A549 (cell line): ENCODE measurements at regions of chr19 and their contacts with region 1.

Region 1: DNA sequence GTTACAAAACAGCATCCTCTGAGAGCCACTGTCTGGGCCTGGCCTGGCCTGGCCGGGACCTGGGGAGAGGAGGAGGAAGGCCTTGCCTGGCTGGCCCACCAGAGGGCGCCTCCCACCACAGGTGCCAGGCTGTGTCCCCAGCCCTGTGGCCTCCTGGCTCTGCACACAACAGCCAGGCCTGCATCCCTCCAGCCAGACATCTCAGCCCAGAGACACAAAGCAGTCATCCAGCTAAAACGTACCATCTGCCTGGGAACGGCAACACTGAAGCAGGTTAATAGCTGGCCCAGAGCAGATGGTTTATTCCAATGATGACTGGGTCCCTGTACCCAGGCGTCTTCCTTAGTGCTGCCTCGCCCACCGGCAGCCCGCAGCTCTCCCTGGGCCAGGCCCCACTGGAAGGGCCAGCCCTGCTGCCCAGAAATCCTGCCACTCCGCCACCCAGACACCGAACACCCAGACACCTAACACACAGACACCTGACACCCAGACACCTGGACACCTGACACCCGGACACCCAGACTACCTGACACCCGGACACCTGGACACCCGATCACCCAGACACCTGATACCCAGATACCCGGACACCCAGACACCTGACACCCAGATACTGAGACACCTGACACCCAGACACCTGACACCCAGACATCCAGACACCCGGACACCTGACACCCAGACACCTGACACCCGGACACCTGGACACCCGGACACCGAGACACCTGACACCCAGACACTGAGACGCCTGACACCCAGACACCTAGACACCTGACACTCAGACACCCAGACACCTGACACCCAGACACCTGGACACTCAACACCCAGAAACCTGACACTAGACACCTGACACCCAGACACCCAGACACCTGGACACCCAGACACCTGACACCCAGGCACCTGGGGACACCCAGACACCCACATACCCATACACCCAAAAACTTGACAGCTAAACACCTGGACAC is 20.1 kb downstream of the C19orf12 start:
- DNase-seq: peak; percentile 84 to 85
- ATAC-seq: peak; percentile 96 to 99
- H3K4me3 ChIP-seq: no peak overlapping the region
- H3K27ac ChIP-seq: no peak overlapping the region
- H3K4me1 ChIP-seq: no peaks in the 10 kb centered on the region
- CTCF ChIP-seq: peak; percentile 81
- EP300 ChIP-seq: no peak
- POLR2A ChIP-seq: no peak
- RAD21 ChIP-seq: peak; percentile 58 to 68

Region 2: GRCh38 chr19:29366757-29367156 is 328.2 kb before region 1 on chr19:
- CTCF ChIA-PET with region 1: no interaction called
- POLR2A ChIA-PET with region 1: no interaction called
- DNase-seq: no peak
- ATAC-seq: no peak
- H3K4me3 ChIP-seq: no peak overlapping the region
- H3K27ac ChIP-seq: no peak overlapping the region
- H3K4me1 ChIP-seq: no peaks in the 10 kb centered on the region
- CTCF ChIP-seq: no peak
- EP300 ChIP-seq: no peak
- POLR2A ChIP-seq: no peak
- RAD21 ChIP-seq: no peak

Region 3: GRCh38 chr19:29651622-29652394 is 43.1 kb before region 1 on chr19:
- CTCF ChIA-PET with region 1: no interaction called
- POLR2A ChIA-PET with region 1: no interaction called
- DNase-seq: no peak
- ATAC-seq: no peak
- H3K4me3 ChIP-seq: no peak overlapping the region
- H3K27ac ChIP-seq: no peak overlapping the region
- H3K4me1 ChIP-seq: no peaks in the 10 kb centered on the region
- CTCF ChIP-seq: no peak
- EP300 ChIP-seq: no peak
- POLR2A ChIP-seq: no peak
- RAD21 ChIP-seq: no peak

Region 4: DNA sequence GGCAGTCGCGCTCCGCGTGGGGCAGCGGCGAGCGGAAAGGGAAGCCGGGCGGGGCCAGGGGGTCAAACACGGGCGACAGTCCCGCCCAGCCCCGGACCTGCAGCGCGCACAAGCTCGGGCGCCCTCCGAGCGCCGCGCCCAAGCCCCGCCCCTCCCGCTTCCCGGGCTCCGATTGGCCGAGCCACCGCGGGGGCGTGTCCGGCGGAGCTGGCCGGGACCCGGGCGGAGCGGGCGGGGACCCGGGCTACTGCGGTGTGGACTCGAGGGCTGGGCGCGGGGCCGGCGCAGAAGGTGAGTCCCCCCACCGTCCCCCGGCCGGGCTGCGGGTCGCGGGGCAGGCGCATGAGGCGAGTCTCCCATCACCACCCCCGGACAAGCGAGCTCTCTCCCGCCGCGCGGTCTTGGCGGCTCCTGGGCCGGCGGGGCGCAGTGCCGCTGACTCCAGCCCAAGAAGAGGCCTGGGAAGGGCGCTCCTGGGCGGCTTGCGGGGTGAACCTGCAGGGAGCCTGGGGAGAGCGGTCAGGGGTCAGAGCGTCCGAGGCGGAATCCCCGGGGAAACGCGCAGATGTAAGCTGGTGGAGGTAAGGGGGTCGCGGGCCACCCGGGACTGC is 29.6 kb before region 1 on chr19 and contains the start of gene PLEKHF1:
- CTCF ChIA-PET with region 1: interaction called, 13 read pairs
- POLR2A ChIA-PET with region 1: no interaction called
- DNase-seq: peak; percentile 85 to 98
- ATAC-seq: peak; percentile 87 to 97
- H3K4me3 ChIP-seq: peak within 1 kb of the TSS; percentile 82
- H3K27ac ChIP-seq: peak within 1 kb of the TSS; percentile 74 to 86
- H3K4me1 ChIP-seq: peaks cover 19% of the 10 kb centered on the region
- CTCF ChIP-seq: no peak
- EP300 ChIP-seq: no peak
- POLR2A ChIP-seq: peak; percentile 35; the same call in 1 of the 2 replicates
- RAD21 ChIP-seq: no peak
- polyA plus RNA-seq, gene PLEKHF1: 2.1 and 2.3 TPM in 2 replicates

Region 5: GRCh38 chr19:29671393-29672160 is 23.4 kb before region 1 on chr19:
- CTCF ChIA-PET with region 1: interaction called, 33 read pairs
- POLR2A ChIA-PET with region 1: no interaction called
- DNase-seq: peak in 1 of 2 experiments; percentile 56
- ATAC-seq: peak in 1 of 2 experiments; percentile 49; a peak in 3 of 6 replicates
- H3K4me3 ChIP-seq: no peak overlapping the region
- H3K27ac ChIP-seq: no peak overlapping the region
- H3K4me1 ChIP-seq: peaks cover 6% of the 10 kb centered on the region; the same call in 1 of the 3 replicates
- CTCF ChIP-seq: no peak
- EP300 ChIP-seq: no peak
- POLR2A ChIP-seq: no peak
- RAD21 ChIP-seq: no peak

Region 6: GRCh38 chr19:29680447-29680846 is 14.5 kb before region 1 on chr19:
- CTCF ChIA-PET with region 1: interaction called, 33 read pairs
- POLR2A ChIA-PET with region 1: no interaction called
- DNase-seq: no peak
- ATAC-seq: peak in 1 of 2 experiments; percentile 3; a peak in 3 of 6 replicates
- H3K4me3 ChIP-seq: no peak overlapping the region
- H3K27ac ChIP-seq: no peak overlapping the region
- H3K4me1 ChIP-seq: no peaks in the 10 kb centered on the region
- CTCF ChIP-seq: no peak
- EP300 ChIP-seq: no peak
- POLR2A ChIP-seq: no peak
- RAD21 ChIP-seq: no peak

Region 7: DNA sequence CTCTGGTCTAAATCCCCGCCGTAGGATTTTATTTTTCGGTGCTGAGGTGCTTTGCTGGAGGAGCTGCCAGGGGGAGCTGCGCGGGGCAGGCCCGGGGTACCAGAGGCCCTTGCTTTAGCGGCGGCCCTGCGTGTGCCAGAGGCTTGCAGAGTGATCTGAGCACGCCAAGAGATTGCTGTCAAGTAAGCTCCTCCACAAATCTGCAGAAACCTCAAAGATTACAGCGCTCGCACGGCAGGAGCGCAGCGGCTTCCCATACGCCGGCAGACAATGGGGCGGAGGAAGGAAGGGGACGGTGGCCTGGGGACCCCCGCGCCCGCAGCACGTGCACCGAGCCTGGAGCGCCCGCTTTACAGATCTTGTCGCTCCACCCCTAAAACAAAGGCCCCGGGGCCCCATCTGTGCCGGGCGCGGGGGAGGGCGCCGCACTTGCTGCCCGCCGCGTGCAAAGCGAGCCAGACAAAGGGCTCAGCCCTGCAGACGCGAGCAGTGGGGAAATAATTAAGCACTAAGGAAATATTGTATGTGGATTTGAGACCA is 29.2 kb after region 1 on chr19:
- CTCF ChIA-PET with region 1: interaction called, 17 read pairs
- POLR2A ChIA-PET with region 1: no interaction called
- DNase-seq: no peak
- ATAC-seq: no peak
- H3K4me3 ChIP-seq: no peak overlapping the region
- H3K27ac ChIP-seq: no peak overlapping the region
- H3K4me1 ChIP-seq: no peaks in the 10 kb centered on the region
- CTCF ChIP-seq: no peak
- EP300 ChIP-seq: no peak
- POLR2A ChIP-seq: no peak
- RAD21 ChIP-seq: no peak

Region 8: GRCh38 chr19:29806098-29806866 is 111.3 kb after region 1 on chr19:
- CTCF ChIA-PET with region 1: no interaction called
- POLR2A ChIA-PET with region 1: no interaction called
- DNase-seq: peak; percentile 53 to 89
- ATAC-seq: peak in 1 of 2 experiments; percentile 78; a peak in 3 of 6 replicates
- H3K4me3 ChIP-seq: no peak overlapping the region
- H3K27ac ChIP-seq: peak overlapping the region in 1 of 2 experiments; percentile 6; a peak in 1 of 6 replicates
- H3K4me1 ChIP-seq: peaks cover 14% of the 10 kb centered on the region
- CTCF ChIP-seq: no peak
- EP300 ChIP-seq: no peak
- POLR2A ChIP-seq: no peak
- RAD21 ChIP-seq: no peak

Region 9: DNA sequence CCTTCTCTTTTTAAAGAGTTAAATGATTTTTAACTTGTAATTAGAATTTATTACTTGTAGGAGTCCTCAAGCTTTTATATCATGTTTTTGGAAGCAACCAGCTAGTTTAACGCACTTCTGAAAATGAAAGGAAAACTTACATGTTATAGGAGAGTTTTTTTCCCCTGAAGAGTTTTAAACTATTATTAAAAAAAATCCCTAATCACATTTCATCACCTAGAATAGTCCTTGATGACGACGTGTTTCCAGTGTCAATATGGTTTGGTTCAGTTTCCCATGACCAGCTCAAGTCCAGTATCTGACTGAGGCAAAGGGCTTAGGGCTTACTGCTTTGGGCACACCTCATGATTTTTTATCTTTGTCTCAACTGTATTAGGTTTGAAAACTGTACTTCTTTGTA is 283.1 kb after region 1 on chr19:
- CTCF ChIA-PET with region 1: no interaction called
- POLR2A ChIA-PET with region 1: no interaction called
- DNase-seq: no peak
- ATAC-seq: no peak
- H3K4me3 ChIP-seq: no peak overlapping the region
- H3K27ac ChIP-seq: no peak overlapping the region
- H3K4me1 ChIP-seq: peaks cover 4% of the 10 kb centered on the region; the same call in 1 of the 3 replicates
- CTCF ChIP-seq: no peak
- EP300 ChIP-seq: no peak
- POLR2A ChIP-seq: no peak
- RAD21 ChIP-seq: no peak